ENCODE measurements at regions of chr5 and their contacts with region 1.

Region 1: DNA sequence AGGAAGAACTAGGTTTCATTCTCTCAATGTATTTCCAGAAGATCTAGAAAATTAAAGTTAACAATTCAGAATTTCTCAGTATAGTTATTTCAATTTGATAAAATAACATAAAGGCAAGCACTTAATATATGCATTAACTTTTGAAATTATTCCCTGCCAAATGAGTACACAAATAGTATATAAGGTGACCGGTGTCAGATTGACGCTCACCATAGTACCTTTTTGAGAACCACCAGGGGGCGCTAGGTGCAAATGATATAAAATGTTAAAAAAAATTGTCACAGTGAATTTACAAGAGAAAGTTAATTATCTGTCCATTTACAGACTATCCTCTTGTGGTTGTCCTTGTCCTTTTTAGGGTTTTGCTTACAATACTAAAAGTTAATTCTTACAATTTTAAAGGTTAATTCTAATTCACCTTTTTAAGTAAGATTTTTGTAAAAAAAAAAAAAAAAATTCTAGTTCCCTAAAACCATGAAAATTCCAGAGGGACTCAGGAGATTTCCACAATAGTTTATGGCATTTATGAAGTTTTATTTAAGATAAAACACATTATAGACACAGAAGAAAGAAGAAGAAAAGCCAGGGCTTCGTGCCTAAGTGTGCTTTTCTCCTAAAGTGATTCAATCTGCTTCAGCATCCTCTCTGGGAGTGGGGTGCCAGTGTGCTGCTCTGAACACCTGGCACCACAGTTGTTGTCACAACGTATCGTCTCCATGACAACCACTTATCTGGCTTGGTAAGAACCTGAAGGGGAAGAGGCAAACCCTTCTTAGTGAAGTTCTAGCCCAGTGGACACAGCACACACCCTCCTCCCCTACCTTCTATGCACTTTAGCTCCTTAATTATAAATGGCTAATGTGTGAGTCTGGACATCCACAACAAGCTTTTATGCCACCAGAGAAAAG is 1.7 kb downstream of the ADAMTS16 start:
- DNase-seq: peak; percentile 60 to 65
- H3K4me3 ChIP-seq: no peak overlapping the region
- H3K27ac ChIP-seq: no peak overlapping the region
- H3K4me1 ChIP-seq: peaks cover 20% of the 10 kb centered on the region
- H3K27me3 ChIP-seq: no peaks in the 10 kb centered on the region
- CTCF ChIP-seq: peak; percentile 97

Region 2: DNA sequence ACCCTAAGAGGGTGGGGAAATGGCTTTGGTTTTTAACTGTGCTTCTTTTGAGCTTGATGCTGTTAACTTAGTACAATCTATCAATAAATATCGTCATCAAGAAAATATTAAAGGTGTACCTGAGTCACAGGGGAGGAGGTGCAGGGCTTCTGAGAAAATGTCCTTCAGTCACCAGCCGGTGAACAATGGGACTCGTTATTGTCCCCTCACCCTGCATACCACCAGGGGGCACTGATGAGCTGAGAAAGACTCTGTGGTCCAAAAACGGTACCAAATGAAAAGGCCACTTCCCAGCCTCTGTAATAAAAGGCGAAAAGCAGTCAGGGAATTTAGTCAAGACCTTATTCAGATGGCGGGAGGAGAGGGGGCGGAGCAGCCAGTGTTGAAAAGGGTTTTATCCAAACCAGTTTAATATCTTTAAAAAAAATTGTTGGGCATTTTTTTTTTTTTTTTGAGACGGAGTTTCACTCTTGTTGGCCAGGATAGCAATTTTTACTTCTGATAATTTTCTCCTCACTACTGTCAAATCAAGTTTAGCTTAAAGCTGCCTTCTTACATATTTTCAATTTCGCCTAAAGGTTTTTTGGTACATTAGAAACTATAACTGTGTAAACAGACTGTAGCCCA is 273.7 kb before region 1 on chr5:
- CTCF ChIA-PET with region 1: no interaction called
- POLR2A ChIA-PET with region 1: no interaction called
- intact Hi-C with region 1: loop called (anchors 5 kb)
- DNase-seq: peak; percentile 42 to 75
- H3K4me3 ChIP-seq: no peak overlapping the region
- H3K27ac ChIP-seq: no peak overlapping the region
- H3K4me1 ChIP-seq: no peaks in the 10 kb centered on the region
- H3K27me3 ChIP-seq: peaks cover 47% of the 10 kb centered on the region
- CTCF ChIP-seq: peak; percentile 98

Region 3: GRCh38 chr5:5209089-5209488 is 67.2 kb after region 1 on chr5:
- CTCF ChIA-PET with region 1: no interaction called
- POLR2A ChIA-PET with region 1: no interaction called
- intact Hi-C with region 1: no loop called
- DNase-seq: no peak
- H3K4me3 ChIP-seq: no peak overlapping the region
- H3K27ac ChIP-seq: no peak overlapping the region
- H3K4me1 ChIP-seq: no peaks in the 10 kb centered on the region
- H3K27me3 ChIP-seq: no peaks in the 10 kb centered on the region
- CTCF ChIP-seq: no peak

Region 4: GRCh38 chr5:5270958-5271605 is 129.2 kb after region 1 on chr5:
- CTCF ChIA-PET with region 1: no interaction called
- POLR2A ChIA-PET with region 1: no interaction called
- intact Hi-C with region 1: loop called (anchors 1 kb)
- DNase-seq: peak; percentile 97 to 100
- H3K4me3 ChIP-seq: peak overlapping the region; percentile 52
- H3K27ac ChIP-seq: peak overlapping the region; percentile 90
- H3K4me1 ChIP-seq: peaks cover 33% of the 10 kb centered on the region
- H3K27me3 ChIP-seq: no peaks in the 10 kb centered on the region
- CTCF ChIP-seq: no peak

Region 5: DNA sequence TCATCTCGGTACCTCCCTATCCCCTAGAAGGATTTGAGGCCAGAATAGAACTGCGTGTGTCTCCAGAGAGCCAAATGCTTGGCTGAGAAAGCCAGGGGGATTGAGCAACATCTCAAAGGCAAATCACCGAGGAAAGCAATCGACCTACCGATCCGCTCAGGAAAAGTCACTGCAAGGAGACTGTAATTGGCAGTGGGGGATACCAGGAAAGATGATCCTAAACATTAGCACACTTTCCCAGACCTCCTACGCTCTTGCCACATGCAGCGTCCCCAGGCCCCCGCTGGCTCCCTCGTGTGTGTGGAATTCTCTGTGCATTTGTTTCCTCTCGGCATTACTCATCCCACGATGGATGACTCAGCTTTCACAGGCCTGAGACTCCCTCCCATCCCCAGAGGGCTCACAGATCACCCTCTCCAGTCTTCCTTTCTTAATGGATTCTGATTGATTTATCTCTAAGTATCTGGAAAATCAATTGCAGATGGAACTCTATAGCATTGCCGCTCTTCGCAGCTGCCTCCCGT is 198.4 kb after region 1 on chr5:
- CTCF ChIA-PET with region 1: interaction called, 6 read pairs
- POLR2A ChIA-PET with region 1: no interaction called
- intact Hi-C with region 1: loop called (anchors 1 kb)
- DNase-seq: peak; percentile 61 to 95
- H3K4me3 ChIP-seq: no peak overlapping the region
- H3K27ac ChIP-seq: no peak overlapping the region
- H3K4me1 ChIP-seq: peaks cover 25% of the 10 kb centered on the region
- H3K27me3 ChIP-seq: no peaks in the 10 kb centered on the region
- CTCF ChIP-seq: peak; percentile 55; the same call in 1 of the 2 replicates

Region 6: GRCh38 chr5:5939759-5940370 is 798.0 kb after region 1 on chr5:
- CTCF ChIA-PET with region 1: no interaction called
- POLR2A ChIA-PET with region 1: interaction called, 11 read pairs
- intact Hi-C with region 1: no loop called
- DNase-seq: no peak
- H3K4me3 ChIP-seq: no peak overlapping the region
- H3K27ac ChIP-seq: no peak overlapping the region
- H3K4me1 ChIP-seq: no peaks in the 10 kb centered on the region
- H3K27me3 ChIP-seq: peaks cover 4% of the 10 kb centered on the region
- CTCF ChIP-seq: no peak

Measured in PC-9 (cell line).